ENCODE measurements at regions of chr18 and their contacts with region 1.

Region 1: GRCh38 chr18:63848159-63848558 is 39.3 kb upstream of the SERPINB2 start:
- DNase-seq: peak; percentile 12 to 56
- H3K4me3 ChIP-seq: no peak overlapping the region
- H3K27ac ChIP-seq: no peak overlapping the region
- H3K4me1 ChIP-seq: peaks cover 5% of the 10 kb centered on the region; the same call in 1 of the 2 replicates
- H3K27me3 ChIP-seq: no peaks in the 10 kb centered on the region
- CTCF ChIP-seq: peak; percentile 74

Region 2: DNA sequence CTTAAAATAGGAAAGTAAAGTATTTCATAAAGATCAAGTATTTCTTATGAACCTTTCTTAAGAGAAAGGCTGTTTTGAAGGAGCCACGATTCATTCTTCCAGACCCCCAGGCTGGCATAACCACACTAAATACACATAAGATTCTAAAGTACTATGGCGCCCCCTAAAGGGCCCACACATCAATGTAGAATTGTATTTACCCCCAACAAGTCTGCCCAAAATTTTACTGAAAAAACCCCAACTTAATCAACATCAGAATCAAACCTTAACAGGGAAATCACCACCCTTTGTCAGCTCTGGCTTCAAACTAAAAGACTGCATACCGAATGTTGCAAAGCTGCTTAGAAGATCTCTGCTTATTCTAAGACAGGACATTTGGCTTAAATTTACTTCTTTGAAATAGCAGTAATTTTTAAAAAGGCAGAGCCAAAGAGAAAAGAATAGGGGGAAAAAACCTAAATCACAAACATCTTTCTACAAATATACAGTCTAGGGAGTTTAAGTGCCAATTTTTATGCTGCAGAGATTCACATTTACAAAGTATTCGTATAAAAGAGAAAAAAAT is 508.2 kb before region 1 on chr18:
- CTCF ChIA-PET with region 1: no interaction called
- POLR2A ChIA-PET with region 1: no interaction called
- intact Hi-C with region 1: loop called (anchors 10 kb)
- DNase-seq: no peak
- H3K4me3 ChIP-seq: no peak overlapping the region
- H3K27ac ChIP-seq: no peak overlapping the region
- H3K4me1 ChIP-seq: peaks cover 21% of the 10 kb centered on the region
- H3K27me3 ChIP-seq: no peaks in the 10 kb centered on the region
- CTCF ChIP-seq: peak; percentile 68

Region 3: GRCh38 chr18:63518178-63519012 is 329.8 kb before region 1 on chr18:
- CTCF ChIA-PET with region 1: interaction called, 4 read pairs
- POLR2A ChIA-PET with region 1: no interaction called
- intact Hi-C with region 1: loop called (anchors 1 kb)
- DNase-seq: peak; percentile 45 to 67
- H3K4me3 ChIP-seq: no peak overlapping the region
- H3K27ac ChIP-seq: no peak overlapping the region
- H3K4me1 ChIP-seq: no peaks in the 10 kb centered on the region
- H3K27me3 ChIP-seq: no peaks in the 10 kb centered on the region
- CTCF ChIP-seq: peak; percentile 79

Region 4: DNA sequence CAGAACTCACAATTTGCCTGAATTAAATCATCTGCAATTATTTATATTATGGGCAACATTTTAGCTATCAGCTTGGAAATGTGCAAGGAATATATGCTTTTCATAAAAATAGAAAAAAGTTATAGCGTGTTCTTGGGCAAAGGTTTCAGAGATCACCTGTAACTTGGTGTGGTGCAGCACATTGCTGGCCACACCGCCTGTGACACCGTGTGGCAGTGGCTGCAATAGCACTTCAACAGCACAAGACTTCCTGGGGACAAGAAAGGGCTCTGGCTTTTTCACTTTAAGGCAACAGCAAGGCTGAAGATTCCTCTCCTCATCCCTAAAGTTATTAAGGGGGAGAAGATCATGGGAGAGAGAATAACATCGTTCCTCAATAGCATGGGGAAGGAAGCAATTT is 171.6 kb before region 1 on chr18:
- CTCF ChIA-PET with region 1: no interaction called
- POLR2A ChIA-PET with region 1: no interaction called
- intact Hi-C with region 1: loop called (anchors 2 kb)
- DNase-seq: peak in 1 of 2 experiments; percentile 16
- H3K4me3 ChIP-seq: no peak overlapping the region
- H3K27ac ChIP-seq: no peak overlapping the region
- H3K4me1 ChIP-seq: peaks cover 4% of the 10 kb centered on the region
- H3K27me3 ChIP-seq: no peaks in the 10 kb centered on the region
- CTCF ChIP-seq: peak; percentile 60

Region 5: GRCh38 chr18:63936156-63936931 is 88.2 kb after region 1 on chr18:
- CTCF ChIA-PET with region 1: no interaction called
- POLR2A ChIA-PET with region 1: no interaction called
- intact Hi-C with region 1: loop called (anchors 1 kb)
- DNase-seq: peak; percentile 60 to 72
- H3K4me3 ChIP-seq: peak overlapping the region; percentile 44; the same call in 1 of the 2 replicates
- H3K27ac ChIP-seq: no peak overlapping the region
- H3K4me1 ChIP-seq: no peaks in the 10 kb centered on the region
- H3K27me3 ChIP-seq: no peaks in the 10 kb centered on the region
- CTCF ChIP-seq: peak; percentile 69

Measured in PC-9 (cell line).